Activated CD4-positive, alpha-beta memory T cell treated with anti-CD3 and anti-CD28 coated beads, Interleukin-2, amount 10 ng/mL, durations not matched to agents 7 days and 5 days (primary cell): ENCODE measurements at regions of chr2 and their contacts with region 1.

Region 1: DNA sequence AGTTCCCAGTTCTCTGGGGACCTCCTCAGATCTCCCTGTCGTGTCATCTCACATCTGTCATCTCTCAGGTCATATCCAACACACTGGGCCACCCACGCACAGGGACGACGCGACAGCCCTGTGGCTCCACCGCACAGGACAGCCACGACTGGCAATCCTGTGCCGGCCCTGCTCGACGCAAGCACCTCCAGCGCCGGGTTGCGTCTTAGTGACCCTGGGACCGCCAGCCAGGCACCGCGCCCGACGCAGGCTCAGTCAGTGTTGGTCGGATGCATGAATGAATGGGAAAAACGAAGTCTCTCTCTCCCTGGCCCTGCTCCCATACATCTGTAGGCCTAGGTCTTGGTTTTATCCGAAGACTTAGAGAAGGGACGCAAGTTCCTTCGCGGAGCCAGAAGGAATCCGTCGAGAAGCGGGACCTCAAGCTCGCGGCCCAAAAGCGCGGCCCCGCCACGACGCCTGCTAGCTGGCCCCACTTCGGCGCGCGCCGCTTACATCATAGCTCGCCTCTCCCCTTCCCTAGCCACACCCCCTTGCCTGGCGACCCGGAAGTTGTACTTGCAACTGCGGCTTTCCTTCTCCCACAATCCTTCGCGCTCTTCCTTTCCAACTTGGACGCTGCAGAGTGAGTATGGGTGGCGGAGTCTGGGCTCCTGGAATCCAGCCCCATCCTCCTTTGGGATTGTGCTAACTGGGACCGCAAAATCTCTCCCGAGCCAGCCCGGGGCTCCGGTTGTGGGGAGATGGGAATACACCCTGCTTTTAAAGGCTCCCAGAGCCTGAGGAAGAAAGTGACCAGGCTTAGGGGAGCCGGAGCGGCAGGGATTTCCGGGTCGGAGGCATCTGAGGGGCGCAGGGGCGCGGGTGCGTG is at the start of gene RPL31:
- DNase-seq: peak; percentile 97
- H3K4me3 Mint-ChIP-seq: peak within 1 kb of the TSS; percentile 100
- H3K27ac Mint-ChIP-seq: peak within 1 kb of the TSS; percentile 87
- H3K4me1 Mint-ChIP-seq: peaks cover 49% of the 10 kb centered on the region
- H3K27me3 Mint-ChIP-seq: peaks cover 3% of the 10 kb centered on the region
- total RNA-seq, gene RPL31: 1,356 to 1,364 TPM

Region 2: DNA sequence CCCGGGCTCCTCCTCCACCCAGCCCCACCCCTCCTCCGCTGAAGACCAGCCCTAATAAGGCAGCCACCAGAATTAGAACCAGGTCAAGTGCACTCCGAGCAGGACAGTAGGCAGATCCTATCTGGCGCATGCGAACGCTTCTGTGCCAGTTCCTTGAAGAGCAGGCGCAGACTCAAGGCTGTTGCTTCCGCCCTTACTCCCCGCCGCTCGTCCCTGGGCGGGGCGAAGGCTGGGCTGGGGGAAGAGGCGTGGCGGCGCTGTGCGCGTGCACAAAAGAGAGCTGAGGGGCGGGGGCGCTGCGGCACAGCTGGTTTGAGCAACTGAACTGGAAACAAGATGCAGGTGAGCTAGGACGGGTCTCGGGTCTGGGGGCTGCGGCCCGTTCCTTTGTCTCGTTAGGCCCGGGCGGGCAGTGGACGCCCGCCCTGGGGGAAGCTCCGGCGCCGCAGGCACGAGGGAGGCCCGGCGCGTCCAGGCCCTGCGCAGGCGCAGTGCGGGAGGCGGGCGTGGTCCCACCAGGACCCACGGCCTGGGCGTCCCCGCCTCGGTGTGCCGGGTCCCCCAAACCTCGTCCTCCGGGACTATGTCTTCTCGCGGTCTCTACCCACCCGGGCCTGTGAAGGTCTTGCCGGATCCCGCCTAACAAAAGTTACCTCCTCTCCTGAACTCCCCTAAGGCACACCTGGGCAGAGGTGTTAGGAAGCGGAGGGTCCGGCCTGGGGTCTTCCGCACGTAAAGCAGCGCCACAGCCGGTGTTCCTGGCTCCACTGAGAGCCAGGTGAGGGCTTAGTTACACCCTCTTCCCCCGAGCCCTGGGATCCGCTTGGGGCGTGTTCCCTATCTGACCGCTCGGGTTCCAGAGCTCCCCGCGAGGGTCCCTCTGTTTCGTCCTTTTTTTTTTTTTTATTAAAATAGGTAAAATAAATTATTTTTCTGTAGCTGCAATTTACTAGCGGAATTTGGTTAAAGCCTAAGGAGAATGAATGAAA is 438.9 kb before region 1 on chr2 and contains the start of gene PDCL3:
- CTCF ChIA-PET with region 1: interaction called, 4 read pairs
- POLR2A ChIA-PET with region 1: interaction called, 45 read pairs
- DNase-seq: peak; percentile 95
- H3K4me3 Mint-ChIP-seq: peak within 1 kb of the TSS; percentile 93
- H3K27ac Mint-ChIP-seq: peak within 1 kb of the TSS; percentile 100
- H3K4me1 Mint-ChIP-seq: peaks cover 53% of the 10 kb centered on the region
- H3K27me3 Mint-ChIP-seq: no peaks in the 10 kb centered on the region
- total RNA-seq, gene PDCL3: 39.6 to 40.4 TPM

Region 3: GRCh38 chr2:100984892-100985379 is 17.0 kb before region 1 on chr2:
- CTCF ChIA-PET with region 1: interaction called, 4 read pairs
- POLR2A ChIA-PET with region 1: interaction called, 11 read pairs
- DNase-seq: peak; percentile 77
- H3K4me3 Mint-ChIP-seq: no peak overlapping the region
- H3K27ac Mint-ChIP-seq: no peak overlapping the region
- H3K4me1 Mint-ChIP-seq: no peaks in the 10 kb centered on the region
- H3K27me3 Mint-ChIP-seq: peaks cover 3% of the 10 kb centered on the region

Region 4: GRCh38 chr2:101012706-101013181 is 10.8 kb after region 1 on chr2:
- CTCF ChIA-PET with region 1: interaction called, 41 read pairs
- POLR2A ChIA-PET with region 1: interaction called, 9 read pairs
- DNase-seq: peak; percentile 25
- H3K4me3 Mint-ChIP-seq: no peak overlapping the region
- H3K27ac Mint-ChIP-seq: no peak overlapping the region
- H3K4me1 Mint-ChIP-seq: peaks cover 32% of the 10 kb centered on the region
- H3K27me3 Mint-ChIP-seq: no peaks in the 10 kb centered on the region

Region 5: DNA sequence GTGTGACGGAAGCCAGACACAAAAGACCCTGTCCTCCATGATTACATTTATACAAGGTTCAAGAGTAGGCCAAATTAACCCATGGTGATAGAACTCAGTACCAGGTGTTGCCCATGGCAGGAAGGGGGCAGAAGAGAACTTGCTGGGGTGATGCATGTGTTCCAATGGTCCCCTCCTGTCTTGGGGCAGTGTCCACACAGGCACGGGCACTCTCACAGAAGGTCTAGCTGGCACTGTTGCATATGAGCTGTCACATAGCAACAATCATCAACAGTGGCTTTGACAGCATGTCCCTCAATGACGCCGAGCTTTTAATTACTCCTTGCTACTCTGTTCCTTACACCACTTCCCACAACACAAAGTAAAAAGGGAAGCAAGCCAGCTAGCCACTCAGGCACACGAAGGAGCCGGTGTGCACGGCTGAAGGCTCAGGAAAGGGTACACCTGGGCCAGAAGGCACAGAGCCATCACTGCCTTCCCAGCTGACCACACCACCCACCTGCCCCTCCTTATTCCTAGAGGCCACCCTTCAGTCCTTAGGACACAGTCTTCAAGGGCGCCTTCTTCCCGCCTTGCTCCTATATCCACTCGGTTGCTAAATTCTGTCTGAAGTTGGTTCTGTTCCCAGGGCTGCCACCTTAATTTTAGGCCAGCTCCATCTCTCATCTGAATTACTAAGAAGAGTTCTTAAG is 29.1 kb after region 1 on chr2:
- CTCF ChIA-PET with region 1: no interaction called
- POLR2A ChIA-PET with region 1: interaction called, 10 read pairs
- DNase-seq: no peak
- H3K4me3 Mint-ChIP-seq: no peak overlapping the region
- H3K27ac Mint-ChIP-seq: no peak overlapping the region
- H3K4me1 Mint-ChIP-seq: no peaks in the 10 kb centered on the region
- H3K27me3 Mint-ChIP-seq: no peaks in the 10 kb centered on the region

Region 6: GRCh38 chr2:101205521-101205998 is 203.6 kb after region 1 on chr2:
- CTCF ChIA-PET with region 1: interaction called, 17 read pairs
- POLR2A ChIA-PET with region 1: interaction called, 4 read pairs
- DNase-seq: peak; percentile 62
- H3K4me3 Mint-ChIP-seq: peak overlapping the region; percentile 21
- H3K27ac Mint-ChIP-seq: peak overlapping the region; percentile 59
- H3K4me1 Mint-ChIP-seq: peaks cover 11% of the 10 kb centered on the region
- H3K27me3 Mint-ChIP-seq: peaks cover 2% of the 10 kb centered on the region